HCT116 (cell line): ENCODE measurements at regions of chr3 and their contacts with region 1.

Region 1: GRCh38 chr3:66276705-66277274 is 56.0 kb downstream of the SLC25A26 start:
- DNase-seq: peak; percentile 55
- ATAC-seq: peak; percentile 62
- H3K4me3 ChIP-seq: no peak overlapping the region
- H3K27ac ChIP-seq: no peak overlapping the region
- H3K4me1 ChIP-seq: no peaks in the 10 kb centered on the region
- H3K27me3 ChIP-seq: no peaks in the 10 kb centered on the region
- CTCF ChIP-seq: peak; percentile 60 to 73 (median 62); a peak in 5 of 6 replicates
- POLR2A ChIP-seq: no peak
- RAD21 ChIP-seq: peak; percentile 73

Region 2: DNA sequence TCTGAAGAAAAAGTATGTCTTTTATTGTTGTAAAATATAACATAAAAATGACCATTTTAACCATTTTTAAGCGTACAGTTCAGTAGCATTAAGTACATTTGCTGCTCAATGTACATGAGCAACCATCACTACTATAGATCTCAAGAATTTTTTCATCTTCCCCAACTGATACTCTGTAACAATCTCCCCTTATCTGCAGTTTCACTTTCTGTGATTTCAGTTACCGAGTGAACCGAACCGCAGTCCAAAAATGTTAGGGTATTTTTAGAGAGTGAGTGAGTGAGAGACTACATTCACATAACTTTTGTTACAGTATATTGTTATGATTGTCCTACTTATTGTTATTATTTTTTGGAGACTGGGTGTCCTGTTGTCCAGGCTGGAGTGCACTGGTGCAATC is 65.0 kb before region 1 on chr3:
- CTCF ChIA-PET with region 1: no interaction called
- POLR2A ChIA-PET with region 1: no interaction called
- RAD21 ChIA-PET with region 1: no interaction called
- intact Hi-C with region 1: no loop called
- DNase-seq: no peak
- ATAC-seq: no peak
- H3K4me3 ChIP-seq: no peak overlapping the region
- H3K27ac ChIP-seq: no peak overlapping the region
- H3K4me1 ChIP-seq: no peaks in the 10 kb centered on the region
- H3K27me3 ChIP-seq: no peaks in the 10 kb centered on the region
- CTCF ChIP-seq: no peak
- POLR2A ChIP-seq: no peak
- RAD21 ChIP-seq: no peak

Region 3: GRCh38 chr3:66322436-66322835 is 45.6 kb after region 1 on chr3:
- CTCF ChIA-PET with region 1: no interaction called
- POLR2A ChIA-PET with region 1: no interaction called
- RAD21 ChIA-PET with region 1: no interaction called
- intact Hi-C with region 1: no loop called
- DNase-seq: no peak
- ATAC-seq: no peak
- H3K4me3 ChIP-seq: no peak overlapping the region
- H3K27ac ChIP-seq: no peak overlapping the region
- H3K4me1 ChIP-seq: peaks cover 3 to 7% of the 10 kb centered on the region in 2 experiments; a peak in 2 of 4 replicates
- H3K27me3 ChIP-seq: no peaks in the 10 kb centered on the region
- CTCF ChIP-seq: no peak
- POLR2A ChIP-seq: no peak
- RAD21 ChIP-seq: no peak

Region 4: GRCh38 chr3:66372681-66373350 is 96.0 kb after region 1 on chr3:
- CTCF ChIA-PET with region 1: interaction called, 5 read pairs
- POLR2A ChIA-PET with region 1: no interaction called
- RAD21 ChIA-PET with region 1: no interaction called
- intact Hi-C with region 1: loop called (anchors 5 kb)
- DNase-seq: no peak
- ATAC-seq: no peak
- H3K4me3 ChIP-seq: no peak overlapping the region
- H3K27ac ChIP-seq: no peak overlapping the region
- H3K4me1 ChIP-seq: peaks cover 8 to 11% of the 10 kb centered on the region in 2 experiments; a peak in 3 of 4 replicates
- H3K27me3 ChIP-seq: no peaks in the 10 kb centered on the region
- CTCF ChIP-seq: no peak
- POLR2A ChIP-seq: no peak
- RAD21 ChIP-seq: peak; percentile 41

Region 5: GRCh38 chr3:66816090-66816761 is 539.4 kb after region 1 on chr3:
- CTCF ChIA-PET with region 1: interaction called, 36 read pairs
- POLR2A ChIA-PET with region 1: no interaction called
- RAD21 ChIA-PET with region 1: interaction called in 1 of 2 experiments, 3 read pairs
- intact Hi-C with region 1: loop called (anchors 1 kb)
- DNase-seq: peak; percentile 42
- ATAC-seq: peak; percentile 87
- H3K4me3 ChIP-seq: no peak overlapping the region
- H3K27ac ChIP-seq: no peak overlapping the region
- H3K4me1 ChIP-seq: no peaks in the 10 kb centered on the region
- H3K27me3 ChIP-seq: peaks cover 29% of the 10 kb centered on the region
- CTCF ChIP-seq: peak; percentile 32 to 65 (median 49)
- POLR2A ChIP-seq: no peak
- RAD21 ChIP-seq: peak; percentile 74

Region 6: GRCh38 chr3:66822186-66823008 is 545.6 kb after region 1 on chr3:
- CTCF ChIA-PET with region 1: interaction called, 36 read pairs
- POLR2A ChIA-PET with region 1: no interaction called
- RAD21 ChIA-PET with region 1: interaction called in 1 of 2 experiments, 5 read pairs
- intact Hi-C with region 1: loop called (anchors 1 kb)
- DNase-seq: peak; percentile 64
- ATAC-seq: peak; percentile 99
- H3K4me3 ChIP-seq: no peak overlapping the region
- H3K27ac ChIP-seq: no peak overlapping the region
- H3K4me1 ChIP-seq: no peaks in the 10 kb centered on the region
- H3K27me3 ChIP-seq: peaks cover 22% of the 10 kb centered on the region
- CTCF ChIP-seq: peak; percentile 62 to 90 (median 82); a peak in 5 of 6 replicates
- POLR2A ChIP-seq: no peak
- RAD21 ChIP-seq: peak; percentile 63